Transverse colon (tissue), 4 donors: ENCODE measurements at regions of chr11 and their contacts with region 1.

Region 1: GRCh38 chr11:23058656-23059055 is 198.4 kb upstream of the CCDC179 start:
- DNase-seq: no peak
- H3K4me3 ChIP-seq: no peak overlapping the region
- H3K27ac ChIP-seq: no peak overlapping the region
- H3K4me1 ChIP-seq: no peaks in the 10 kb centered on the region
- H3K27me3 ChIP-seq: no peaks in the 10 kb centered on the region
- CTCF ChIP-seq: no peak
- EP300 ChIP-seq: no peak
- POLR2A ChIP-seq: no peak

Region 2: DNA sequence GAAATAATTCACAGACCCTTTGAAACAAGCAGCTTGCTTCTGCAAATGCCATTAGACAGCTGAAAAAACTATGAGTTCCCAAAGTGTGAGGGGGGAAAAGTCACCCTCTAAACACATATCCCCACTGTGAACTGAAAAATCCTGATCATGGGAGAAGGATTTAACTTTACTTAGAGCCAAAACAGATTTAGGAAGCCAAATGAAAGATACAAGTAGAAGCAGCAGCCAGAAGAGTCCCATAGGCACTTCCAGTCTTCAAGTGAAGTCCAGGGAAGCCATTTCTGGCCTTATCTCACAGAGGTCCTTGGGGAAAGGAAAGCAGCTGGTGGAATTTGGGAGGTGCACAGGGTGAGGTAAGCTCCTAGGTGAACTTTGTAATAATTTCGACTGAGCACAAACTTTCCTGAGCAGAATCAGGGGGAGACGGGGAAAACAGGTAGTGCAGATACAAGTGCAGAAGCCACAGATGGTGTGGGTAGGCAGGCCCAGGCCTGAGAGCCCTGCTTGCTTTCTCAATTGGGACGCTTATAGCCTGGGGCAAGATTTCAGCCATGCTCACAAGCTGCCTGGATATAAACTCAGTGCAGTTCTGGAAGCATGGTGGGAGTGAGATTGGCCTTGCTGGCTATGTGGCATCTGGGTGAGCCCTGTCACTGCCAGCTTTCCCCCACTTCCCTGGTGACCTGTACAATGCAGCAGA is 347.4 kb before region 1 on chr11:
- in situ Hi-C with region 1: no loop called
- intact Hi-C with region 1: loop called (anchors 5 kb)
- DNase-seq: no peak
- H3K4me3 ChIP-seq: no peak overlapping the region
- H3K27ac ChIP-seq: no peak overlapping the region
- H3K4me1 ChIP-seq: peaks cover 0 to 7% (median 1%) of the 10 kb centered on the region in 4 donors
- H3K27me3 ChIP-seq: no peaks in the 10 kb centered on the region
- CTCF ChIP-seq: no peak
- EP300 ChIP-seq: no peak
- POLR2A ChIP-seq: no peak

Region 3: DNA sequence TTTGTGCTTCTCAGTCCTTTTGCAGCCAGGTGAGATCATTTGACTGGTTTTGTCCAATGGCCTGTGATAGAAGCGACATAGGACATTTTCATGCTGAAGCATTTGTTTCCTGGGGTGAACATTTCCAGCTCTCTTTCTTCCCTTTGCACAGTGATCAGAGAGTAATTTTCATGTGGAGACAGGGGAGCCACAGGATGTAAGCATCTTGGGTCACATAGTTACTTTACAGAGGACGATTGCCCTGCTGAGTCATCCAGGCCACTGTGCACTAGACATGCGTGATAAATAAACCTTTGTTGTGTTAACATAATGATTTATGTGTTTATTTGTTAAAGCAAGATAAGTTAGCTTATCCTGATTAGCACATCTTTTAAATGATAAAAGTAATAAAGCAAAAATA is 65.1 kb after region 1 on chr11:
- in situ Hi-C with region 1: no loop called
- intact Hi-C with region 1: no loop called
- DNase-seq: no peak
- H3K4me3 ChIP-seq: no peak overlapping the region
- H3K27ac ChIP-seq: no peak overlapping the region
- H3K4me1 ChIP-seq: peaks cover 0 to 4% (median 0%) of the 10 kb centered on the region in 4 donors
- H3K27me3 ChIP-seq: no peaks in the 10 kb centered on the region
- CTCF ChIP-seq: no peak
- EP300 ChIP-seq: no peak
- POLR2A ChIP-seq: no peak